Activated CD4-positive, alpha-beta memory T cell treated with anti-CD3 and anti-CD28 coated beads for 36 hours (primary cell): ENCODE measurements at regions of chr11 and their contacts with region 1.

Region 1: DNA sequence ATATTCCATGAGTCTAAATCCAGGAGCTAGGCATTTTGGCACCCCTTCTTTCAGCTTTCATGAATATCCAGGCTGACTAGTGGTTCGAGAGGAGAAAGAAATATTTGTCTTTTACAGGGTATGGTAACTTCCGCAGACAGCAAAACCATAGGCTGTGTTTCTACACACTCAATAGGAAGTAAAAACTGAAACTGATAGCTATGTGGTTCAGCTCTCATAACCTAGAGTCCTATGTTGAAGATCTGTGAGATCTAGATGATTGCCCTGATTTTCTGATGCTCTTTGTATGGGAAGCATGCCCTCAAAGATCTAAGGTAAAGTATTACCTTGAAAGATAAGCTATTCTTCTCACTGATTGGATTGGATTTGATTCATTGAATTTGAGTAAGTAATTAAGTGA is 118.3 kb downstream of the CD44 start:
- DNase-seq: no peak
- H3K4me3 Mint-ChIP-seq: no peak overlapping the region
- H3K27ac Mint-ChIP-seq: no peak overlapping the region
- H3K4me1 Mint-ChIP-seq: peaks cover 22% of the 10 kb centered on the region
- H3K27me3 Mint-ChIP-seq: peaks cover 2% of the 10 kb centered on the region

Region 2: GRCh38 chr11:35288817-35289541 is 31.7 kb after region 1 on chr11:
- CTCF ChIA-PET with region 1: no interaction called
- POLR2A ChIA-PET with region 1: no interaction called
- intact Hi-C with region 1: loop called (anchors 1 kb)
- DNase-seq: no peak
- H3K4me3 Mint-ChIP-seq: no peak overlapping the region
- H3K27ac Mint-ChIP-seq: no peak overlapping the region
- H3K4me1 Mint-ChIP-seq: peaks cover 21% of the 10 kb centered on the region
- H3K27me3 Mint-ChIP-seq: no peaks in the 10 kb centered on the region